Ascending aorta (tissue), 2 donors: ENCODE measurements at regions of chr11 and their contacts with region 1.

Region 1: DNA sequence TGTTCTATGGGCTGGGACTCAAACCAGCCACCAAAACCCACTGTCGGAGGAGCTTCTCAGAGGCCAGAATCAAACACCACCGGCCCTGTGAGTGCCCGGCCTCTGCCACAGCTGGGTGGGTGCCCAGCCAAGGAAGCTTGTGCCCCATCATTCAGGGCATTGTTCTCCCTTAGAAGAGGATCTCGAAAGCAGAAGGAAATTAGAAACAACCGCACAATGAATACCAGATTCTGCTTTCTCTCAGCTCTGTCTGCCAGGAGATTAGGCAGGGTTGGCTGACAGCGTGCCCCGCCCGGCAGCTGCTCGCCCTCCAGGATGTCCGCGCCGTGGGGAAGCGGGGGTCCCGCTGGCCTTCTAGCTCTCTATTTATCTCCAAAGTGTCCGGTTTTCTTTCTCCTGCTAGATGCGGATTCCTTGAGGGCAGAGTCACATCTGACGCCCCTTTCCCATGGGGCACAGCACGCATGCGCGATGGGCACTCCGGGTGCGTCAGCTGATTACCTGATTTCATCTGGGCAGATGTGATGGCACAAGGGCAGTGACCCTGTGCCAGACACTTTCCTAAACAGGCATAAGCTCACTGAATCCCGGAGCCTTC is 25.5 kb downstream of the SCGB1A1 start:
- DNase-seq: peak; percentile 44 to 94
- H3K4me3 ChIP-seq: peak overlapping the region; percentile 48 to 60
- H3K27ac ChIP-seq: peak overlapping the region; percentile 88 to 98
- H3K4me1 ChIP-seq: peaks cover 8 to 39% of the 10 kb centered on the region in 2 donors
- H3K27me3 ChIP-seq: no peaks in the 10 kb centered on the region
- CTCF ChIP-seq: no peak

Region 2: DNA sequence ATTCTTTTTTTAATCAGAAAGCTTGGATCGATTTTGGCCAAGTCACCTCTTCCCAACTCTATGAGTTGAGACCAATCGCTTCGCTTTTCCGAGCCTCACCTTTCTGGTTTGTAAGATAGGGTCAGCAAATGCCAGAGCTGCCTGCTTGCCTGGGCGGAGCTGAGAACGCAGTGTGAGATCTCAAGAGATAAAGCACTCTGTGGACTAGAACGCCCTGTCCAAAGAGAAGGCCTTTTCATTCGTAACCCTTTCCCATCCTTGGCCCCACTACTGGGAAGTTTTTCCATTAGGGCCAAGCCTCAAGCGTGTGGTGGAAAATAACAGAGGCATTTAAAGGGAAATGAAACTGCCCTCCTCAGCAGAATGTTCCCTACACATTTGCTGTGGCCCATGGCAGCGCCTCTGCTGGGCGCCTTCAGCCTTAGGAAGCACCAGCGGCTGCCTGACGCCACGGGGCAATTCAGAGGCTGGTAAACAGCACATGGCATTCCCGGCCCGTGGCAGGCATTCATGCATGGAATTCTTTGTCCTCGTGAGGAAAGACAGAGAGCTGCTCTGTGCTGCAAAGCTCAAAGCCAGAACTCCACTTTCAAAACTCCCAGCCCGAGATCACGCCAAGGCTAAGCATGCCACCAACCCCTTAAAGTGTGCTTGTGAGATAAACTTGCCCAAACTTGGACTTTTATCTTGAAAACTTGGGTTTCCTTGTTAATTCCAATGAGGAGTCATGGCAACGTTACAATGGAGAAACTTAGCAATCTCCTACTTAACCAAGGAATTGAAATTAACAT is 64.1 kb after region 1 on chr11:
- intact Hi-C with region 1: loop called (anchors 5 kb)
- DNase-seq: peak; percentile 53 to 90
- H3K4me3 ChIP-seq: peak overlapping the region; percentile 20 to 37
- H3K27ac ChIP-seq: peak overlapping the region; percentile 67 to 76
- H3K4me1 ChIP-seq: peaks cover 0 to 19% of the 10 kb centered on the region in 2 donors
- H3K27me3 ChIP-seq: no peaks in the 10 kb centered on the region
- CTCF ChIP-seq: peak; percentile 29 to 62 (median 59)